ENCODE measurements at regions of chr1 and their contacts with region 1.

Region 1: DNA sequence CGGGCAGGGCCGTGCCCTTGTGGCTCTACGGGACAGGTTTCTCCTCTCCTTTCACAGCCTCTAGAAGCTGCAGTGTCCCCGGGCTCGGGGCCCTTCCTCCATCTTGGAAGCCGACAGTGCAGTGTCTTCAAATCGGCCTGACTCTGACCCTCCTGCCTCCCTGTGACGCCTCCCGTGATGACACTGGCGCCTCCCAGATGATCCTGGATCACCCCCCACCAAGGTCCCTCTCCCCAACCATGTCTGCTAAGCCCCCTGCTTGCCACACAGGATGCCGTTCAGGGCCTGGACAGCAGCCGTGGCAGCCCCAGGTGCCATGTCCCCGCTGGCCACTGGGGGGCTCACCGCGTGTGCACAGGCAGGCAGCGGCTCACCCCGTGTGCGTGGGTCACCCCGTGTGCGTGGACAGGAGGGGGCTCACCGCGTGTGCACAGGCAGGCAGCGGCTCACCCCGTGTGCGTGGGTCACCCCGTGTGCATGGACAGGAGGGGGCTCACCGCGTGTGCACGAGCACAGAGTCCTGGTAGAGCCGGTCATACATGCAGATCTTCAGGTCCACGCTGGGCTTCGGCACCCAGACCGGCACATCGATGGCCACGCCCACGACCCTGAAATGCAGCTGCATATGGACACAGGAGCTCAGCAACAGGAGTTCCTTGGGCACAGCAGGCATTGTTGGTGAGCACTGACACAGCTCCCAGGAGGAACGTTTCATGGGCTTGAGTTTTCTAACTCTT is 24.9 kb upstream of the TMEM52 start:
- DNase-seq: peak in 1 of 2 experiments; percentile 91
- H3K4me3 ChIP-seq: peak overlapping the region in 3 of 4 experiments; percentile 28 to 46 (median 42); a peak in 5 of 8 replicates
- H3K27ac ChIP-seq: no peak overlapping the region
- H3K4me1 ChIP-seq: peaks cover 0 to 2% (median 0%) of the 10 kb centered on the region in 4 experiments; a peak in 2 of 7 replicates
- H3K27me3 ChIP-seq: no peaks in the 10 kb centered on the region
- CTCF ChIP-seq: peak in 2 of 3 experiments; percentile 70 to 88; a peak in 3 of 4 replicates
- EP300 ChIP-seq: no peak
- POLR2A ChIP-seq: no peak
- RAD21 ChIP-seq: peak; percentile 46 to 57

Region 2: DNA sequence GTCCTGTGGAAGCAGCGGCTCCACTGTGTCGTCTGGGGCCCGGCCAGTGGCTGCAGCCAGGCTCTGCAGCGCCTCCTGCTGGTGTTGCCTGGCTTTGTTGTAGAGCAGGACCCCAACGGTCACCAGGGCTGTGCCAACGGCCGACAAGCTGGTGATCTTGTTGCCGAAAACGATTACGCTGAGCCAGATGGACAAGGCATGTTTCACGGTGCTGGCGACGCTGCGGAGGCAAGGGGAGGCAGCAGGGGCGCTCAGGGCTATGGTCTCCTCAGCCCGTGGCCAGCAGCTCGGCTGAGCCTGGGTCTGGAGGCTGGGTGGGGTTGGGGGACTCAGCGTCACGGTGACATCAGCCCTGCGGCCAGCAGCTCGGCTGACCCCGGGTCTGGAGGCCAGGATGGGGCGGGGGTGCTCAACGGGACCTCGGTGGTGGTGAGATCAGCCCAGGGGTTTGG is 278.2 kb before region 1 on chr1:
- CTCF ChIA-PET with region 1: no interaction called
- POLR2A ChIA-PET with region 1: no interaction called
- DNase-seq: peak in 1 of 2 experiments; percentile 88
- H3K4me3 ChIP-seq: no peak overlapping the region
- H3K27ac ChIP-seq: no peak overlapping the region
- H3K4me1 ChIP-seq: no peaks in the 10 kb centered on the region
- H3K27me3 ChIP-seq: no peaks in the 10 kb centered on the region
- CTCF ChIP-seq: peak; percentile 62 to 85 (median 75)
- EP300 ChIP-seq: no peak
- POLR2A ChIP-seq: no peak
- RAD21 ChIP-seq: peak; percentile 46 to 55

Region 3: GRCh38 chr1:1778663-1779447 is 165.1 kb before region 1 on chr1:
- CTCF ChIA-PET with region 1: no interaction called
- POLR2A ChIA-PET with region 1: no interaction called
- DNase-seq: peak; percentile 47 to 92
- H3K4me3 ChIP-seq: peak overlapping the region; percentile 66 to 91 (median 77)
- H3K27ac ChIP-seq: peak overlapping the region; percentile 76
- H3K4me1 ChIP-seq: peaks cover 3 to 48% (median 32%) of the 10 kb centered on the region in 4 experiments
- H3K27me3 ChIP-seq: no peaks in the 10 kb centered on the region
- CTCF ChIP-seq: peak in 2 of 3 experiments; percentile 27 to 53; a peak in 2 of 4 replicates
- EP300 ChIP-seq: no peak
- POLR2A ChIP-seq: peak in 1 of 2 experiments; percentile 69; a peak in 1 of 3 replicates
- RAD21 ChIP-seq: peak in 1 of 2 experiments; percentile 33; a peak in 1 of 4 replicates

Region 4: GRCh38 chr1:1892763-1893120 is 51.3 kb before region 1 on chr1:
- CTCF ChIA-PET with region 1: no interaction called
- POLR2A ChIA-PET with region 1: no interaction called
- DNase-seq: no peak
- H3K4me3 ChIP-seq: no peak overlapping the region
- H3K27ac ChIP-seq: no peak overlapping the region
- H3K4me1 ChIP-seq: peaks cover 0 to 22% (median 16%) of the 10 kb centered on the region in 4 experiments; a peak in 6 of 7 replicates
- H3K27me3 ChIP-seq: no peaks in the 10 kb centered on the region; a peak in 3 of 7 replicates
- CTCF ChIP-seq: no peak
- EP300 ChIP-seq: no peak
- POLR2A ChIP-seq: no peak
- RAD21 ChIP-seq: no peak

Region 5: DNA sequence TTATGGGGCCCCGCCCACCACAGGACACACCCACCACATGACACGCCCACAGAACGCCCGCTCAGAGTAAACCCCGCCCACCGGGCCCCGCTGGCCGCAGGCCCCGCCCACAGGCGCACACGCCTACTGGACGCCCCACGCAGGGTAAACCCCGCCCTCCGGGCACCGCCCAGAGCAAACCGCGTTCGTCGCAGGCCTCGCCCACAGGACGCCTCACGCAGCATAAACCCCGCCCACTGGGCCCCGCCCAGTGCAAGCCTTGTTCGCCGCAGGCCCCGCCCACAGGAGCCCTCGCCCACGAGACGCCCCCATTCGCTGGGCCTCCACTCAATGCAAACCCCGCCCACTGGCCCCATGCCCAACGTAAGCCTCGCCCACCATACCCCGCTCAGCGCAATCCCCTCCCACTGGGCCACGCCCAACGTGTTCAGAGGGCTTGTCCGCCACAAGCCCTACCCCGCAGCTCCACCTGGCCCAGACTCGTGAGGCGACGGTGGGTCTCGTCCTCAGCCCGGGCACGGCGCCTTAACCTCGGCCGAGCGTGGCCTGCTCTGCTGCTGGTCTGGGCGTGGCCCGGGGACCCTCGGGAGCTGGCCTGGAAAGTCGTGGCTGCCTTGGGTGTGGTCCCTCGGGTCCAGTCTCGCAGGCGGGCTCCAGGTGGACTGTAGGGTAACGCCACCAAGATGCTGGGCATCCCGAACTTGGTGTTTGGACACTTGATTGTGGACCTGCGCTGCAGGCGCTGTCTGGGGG is 24.5 kb before region 1 on chr1:
- CTCF ChIA-PET with region 1: interaction called, 21 read pairs
- POLR2A ChIA-PET with region 1: no interaction called
- DNase-seq: peak; percentile 100
- H3K4me3 ChIP-seq: peak overlapping the region in 3 of 4 experiments; percentile 34 to 68 (median 40); a peak in 6 of 8 replicates
- H3K27ac ChIP-seq: no peak overlapping the region
- H3K4me1 ChIP-seq: peaks cover 0 to 19% (median 12%) of the 10 kb centered on the region in 4 experiments; a peak in 6 of 7 replicates
- H3K27me3 ChIP-seq: peaks cover 0 to 2% (median under 1%) of the 10 kb centered on the region in 4 experiments; a peak in 2 of 7 replicates
- CTCF ChIP-seq: no peak
- EP300 ChIP-seq: no peak
- POLR2A ChIP-seq: no peak; a peak in 1 of 3 replicates
- RAD21 ChIP-seq: no peak

Region 6: DNA sequence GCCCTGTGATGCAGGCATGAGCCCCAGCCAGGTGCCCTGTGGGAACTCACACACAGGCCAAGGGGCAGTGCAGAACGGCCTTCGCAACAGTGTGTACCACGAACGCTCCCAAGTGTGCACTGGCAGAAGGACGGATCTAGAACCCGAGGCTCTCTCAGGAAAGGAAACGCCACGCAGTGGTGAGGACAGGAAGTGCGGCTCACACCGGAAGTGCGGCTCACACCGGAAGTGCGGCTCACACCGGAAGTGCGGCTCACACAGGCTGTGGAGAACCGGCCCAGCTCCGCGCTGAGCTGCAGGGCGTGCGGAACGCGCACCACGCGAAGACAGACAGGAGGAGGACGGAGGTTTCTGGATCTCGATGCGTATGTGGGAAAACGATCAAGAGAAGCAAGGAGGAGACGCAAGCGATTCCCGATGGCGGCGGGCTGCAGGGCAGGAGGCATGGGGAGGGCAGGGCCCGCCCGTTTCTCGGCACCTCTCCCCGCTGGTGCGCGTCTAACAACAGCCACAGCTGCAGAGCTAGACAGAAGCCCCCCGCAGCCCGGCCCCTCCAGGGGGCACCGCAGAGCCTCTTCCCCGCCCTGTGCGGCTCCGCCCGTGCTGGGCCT is 10.9 kb after region 1 on chr1:
- CTCF ChIA-PET with region 1: interaction called, 64 read pairs
- POLR2A ChIA-PET with region 1: interaction called, 3 read pairs
- DNase-seq: no peak
- H3K4me3 ChIP-seq: no peak overlapping the region
- H3K27ac ChIP-seq: no peak overlapping the region
- H3K4me1 ChIP-seq: peaks cover 0 to 3% (median under 1%) of the 10 kb centered on the region in 4 experiments; a peak in 4 of 7 replicates
- H3K27me3 ChIP-seq: no peaks in the 10 kb centered on the region; a peak in 1 of 7 replicates
- CTCF ChIP-seq: peak in 2 of 3 experiments; percentile 50 to 51; a peak in 2 of 4 replicates
- EP300 ChIP-seq: no peak
- POLR2A ChIP-seq: no peak
- RAD21 ChIP-seq: 0 out of 4 replicates have a peak, but pooled peaks of 1 of the 2 experiments have one; percentile 5

Region 7: GRCh38 chr1:1966071-1966740 is 22.2 kb after region 1 on chr1:
- CTCF ChIA-PET with region 1: interaction called, 29 read pairs
- POLR2A ChIA-PET with region 1: interaction called, 3 read pairs
- DNase-seq: no peak
- H3K4me3 ChIP-seq: no peak overlapping the region
- H3K27ac ChIP-seq: no peak overlapping the region
- H3K4me1 ChIP-seq: peaks cover 0 to 3% (median 3%) of the 10 kb centered on the region in 4 experiments; a peak in 4 of 7 replicates
- H3K27me3 ChIP-seq: no peaks in the 10 kb centered on the region
- CTCF ChIP-seq: no peak
- EP300 ChIP-seq: no peak
- POLR2A ChIP-seq: no peak
- RAD21 ChIP-seq: no peak

Region 8: DNA sequence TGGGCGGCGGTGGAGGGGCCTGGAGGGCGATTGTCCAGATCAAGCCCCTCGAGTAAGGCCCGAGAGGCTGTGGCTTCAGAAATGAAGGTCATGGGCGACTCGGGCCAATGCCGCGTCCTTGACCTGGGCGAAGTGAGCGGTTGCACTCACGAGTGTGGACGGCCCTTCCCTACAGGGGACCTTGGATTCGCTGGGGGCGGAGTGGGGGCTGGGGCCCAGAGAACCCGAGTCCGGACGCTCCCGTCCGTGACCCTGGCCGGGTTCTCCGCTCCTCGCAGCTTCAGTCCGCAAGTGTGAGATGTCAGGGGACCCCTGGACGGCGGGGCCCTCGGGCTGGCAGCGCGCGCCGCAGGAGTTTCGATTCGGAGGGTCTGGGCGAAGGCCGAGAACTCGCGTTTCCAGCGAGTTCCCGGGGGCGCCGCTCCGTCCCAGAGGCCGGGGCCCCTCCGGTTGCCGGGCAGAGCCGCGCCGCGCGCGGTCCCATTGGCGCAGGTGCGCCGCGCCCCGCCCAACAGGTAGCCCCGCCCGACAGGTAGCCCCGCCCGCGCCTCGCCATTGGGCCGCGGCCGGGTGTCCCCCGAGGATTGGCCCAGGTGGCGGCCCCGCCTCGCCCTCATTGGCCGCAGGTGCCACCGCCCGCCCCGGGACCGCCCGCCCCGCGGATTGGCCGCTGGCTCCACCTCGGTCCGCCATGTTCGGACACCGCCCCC is 105.9 kb after region 1 on chr1 and contains the start of gene PRKCZ:
- CTCF ChIA-PET with region 1: interaction called, 145 read pairs
- POLR2A ChIA-PET with region 1: interaction called, 3 read pairs
- DNase-seq: peak; percentile 71 to 97
- H3K4me3 ChIP-seq: peak within 1 kb of the TSS; percentile 79 to 83 (median 80)
- H3K27ac ChIP-seq: peak within 1 kb of the TSS; percentile 76
- H3K4me1 ChIP-seq: peaks cover 0 to 28% (median 20%) of the 10 kb centered on the region in 4 experiments; a peak in 6 of 7 replicates
- H3K27me3 ChIP-seq: peaks cover 0 to 3% (median 0%) of the 10 kb centered on the region in 4 experiments; a peak in 2 of 7 replicates
- CTCF ChIP-seq: no peak
- EP300 ChIP-seq: no peak
- POLR2A ChIP-seq: peak in 1 of 2 experiments; percentile 66; a peak in 1 of 3 replicates
- RAD21 ChIP-seq: no peak
- total RNA-seq, gene PRKCZ: 45.1 and 49.4 TPM in 2 replicates

Measured in H1 (cell line).